ENCODE measurements at regions of chr4 and their contacts with region 1.

Region 1: GRCh38 chr4:162497564-162498167 is 333.9 kb upstream of the FSTL5 start:
- DNase-seq: peak in 1 of 2 experiments; percentile 27
- H3K4me3 ChIP-seq: no peak overlapping the region
- H3K4me3 Mint-ChIP-seq: no peak overlapping the region
- H3K27ac Mint-ChIP-seq: no peak overlapping the region
- H3K4me1 ChIP-seq: no peaks in the 10 kb centered on the region
- H3K4me1 Mint-ChIP-seq: no peaks in the 10 kb centered on the region
- H3K27me3 ChIP-seq: no peaks in the 10 kb centered on the region
- H3K27me3 Mint-ChIP-seq: peaks cover 4% of the 10 kb centered on the region
- CTCF ChIP-seq: peak; percentile 67 to 80

Region 2: DNA sequence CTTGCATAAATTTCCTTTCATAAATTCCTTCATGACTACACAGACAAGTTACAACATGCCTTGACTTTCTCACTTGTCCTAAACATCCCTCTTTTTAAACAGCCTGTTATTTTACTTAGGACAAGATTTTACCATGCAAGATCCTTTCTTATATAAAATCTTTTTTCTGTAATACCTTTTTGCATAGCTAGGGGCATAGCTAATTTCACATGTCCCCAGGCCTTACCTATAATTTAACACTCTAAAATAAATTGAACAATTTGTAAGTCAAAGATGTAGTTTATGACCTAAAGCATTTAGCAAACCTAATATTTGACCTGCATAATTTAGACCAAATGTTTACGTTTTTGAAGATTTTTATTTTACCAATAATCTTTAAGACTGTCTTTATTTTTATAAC is 62.4 kb after region 1 on chr4:
- CTCF ChIA-PET with region 1: no interaction called
- POLR2A ChIA-PET with region 1: no interaction called
- intact Hi-C with region 1: no loop called
- DNase-seq: no peak
- H3K4me3 ChIP-seq: no peak overlapping the region
- H3K4me3 Mint-ChIP-seq: no peak overlapping the region
- H3K27ac Mint-ChIP-seq: no peak overlapping the region
- H3K4me1 ChIP-seq: no peaks in the 10 kb centered on the region
- H3K4me1 Mint-ChIP-seq: no peaks in the 10 kb centered on the region
- H3K27me3 ChIP-seq: no peaks in the 10 kb centered on the region
- H3K27me3 Mint-ChIP-seq: no peaks in the 10 kb centered on the region
- CTCF ChIP-seq: no peak

Region 3: GRCh38 chr4:162865102-162865501 is 367.4 kb after region 1 on chr4:
- CTCF ChIA-PET with region 1: no interaction called
- POLR2A ChIA-PET with region 1: no interaction called
- intact Hi-C with region 1: loop called (anchors 5 kb)
- DNase-seq: peak in 1 of 2 experiments; percentile 21
- H3K4me3 ChIP-seq: no peak overlapping the region
- H3K4me3 Mint-ChIP-seq: no peak overlapping the region
- H3K27ac Mint-ChIP-seq: no peak overlapping the region
- H3K4me1 ChIP-seq: no peaks in the 10 kb centered on the region
- H3K4me1 Mint-ChIP-seq: no peaks in the 10 kb centered on the region
- H3K27me3 ChIP-seq: no peaks in the 10 kb centered on the region
- H3K27me3 Mint-ChIP-seq: no peaks in the 10 kb centered on the region
- CTCF ChIP-seq: peak in 1 of 2 experiments; percentile 4

Region 4: DNA sequence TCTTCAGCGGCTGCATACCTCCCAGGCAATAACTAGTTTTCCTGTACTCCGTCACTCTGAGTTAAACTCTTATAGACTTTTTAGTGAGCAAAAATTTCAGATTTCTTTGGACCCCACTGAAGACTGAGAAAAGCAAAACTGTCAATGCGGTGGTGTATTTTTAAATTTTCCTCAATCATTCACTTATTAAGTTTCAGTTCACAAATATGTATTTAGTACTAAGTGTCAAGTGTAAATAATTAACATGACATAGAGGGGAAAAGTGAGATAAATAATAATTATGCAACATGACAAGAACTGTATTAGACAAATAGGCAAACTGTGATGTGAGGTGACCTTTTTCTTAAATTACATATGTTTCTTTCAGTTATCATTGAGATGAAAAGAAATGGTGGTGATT is 544.6 kb after region 1 on chr4:
- CTCF ChIA-PET with region 1: no interaction called
- POLR2A ChIA-PET with region 1: no interaction called
- intact Hi-C with region 1: loop called (anchors 1 kb)
- DNase-seq: no peak
- H3K4me3 ChIP-seq: no peak overlapping the region
- H3K4me3 Mint-ChIP-seq: no peak overlapping the region
- H3K27ac Mint-ChIP-seq: no peak overlapping the region
- H3K4me1 ChIP-seq: no peaks in the 10 kb centered on the region
- H3K4me1 Mint-ChIP-seq: no peaks in the 10 kb centered on the region
- H3K27me3 ChIP-seq: no peaks in the 10 kb centered on the region
- H3K27me3 Mint-ChIP-seq: no peaks in the 10 kb centered on the region
- CTCF ChIP-seq: no peak

Region 5: GRCh38 chr4:163332500-163333406 is 835.1 kb after region 1 on chr4 and contains the start of gene NPY1R:
- CTCF ChIA-PET with region 1: interaction called, 3 read pairs
- POLR2A ChIA-PET with region 1: no interaction called
- intact Hi-C with region 1: loop called (anchors 1 kb)
- DNase-seq: peak; percentile 70 to 76
- H3K4me3 ChIP-seq: peak within 1 kb of the TSS; percentile 44
- H3K4me3 Mint-ChIP-seq: peak within 1 kb of the TSS; percentile 87
- H3K27ac Mint-ChIP-seq: no peak within 1 kb of the TSS
- H3K4me1 ChIP-seq: no peaks in the 10 kb centered on the region
- H3K4me1 Mint-ChIP-seq: peaks cover 7% of the 10 kb centered on the region
- H3K27me3 ChIP-seq: no peaks in the 10 kb centered on the region
- H3K27me3 Mint-ChIP-seq: peaks cover 21% of the 10 kb centered on the region
- CTCF ChIP-seq: peak; percentile 74 to 85
- total RNA-seq, gene NPY1R: 1.5 and 3.3 TPM in 2 replicates

Region 6: GRCh38 chr4:163544407-163545038 is 1046.9 kb after region 1 on chr4:
- CTCF ChIA-PET with region 1: no interaction called
- POLR2A ChIA-PET with region 1: no interaction called
- intact Hi-C with region 1: loop called (anchors 1 kb)
- DNase-seq: peak; percentile 50 to 55
- H3K4me3 ChIP-seq: no peak overlapping the region
- H3K4me3 Mint-ChIP-seq: no peak overlapping the region
- H3K27ac Mint-ChIP-seq: no peak overlapping the region
- H3K4me1 ChIP-seq: no peaks in the 10 kb centered on the region
- H3K4me1 Mint-ChIP-seq: no peaks in the 10 kb centered on the region
- H3K27me3 ChIP-seq: no peaks in the 10 kb centered on the region
- H3K27me3 Mint-ChIP-seq: no peaks in the 10 kb centered on the region
- CTCF ChIP-seq: peak; percentile 84 to 90

Measured in Caco-2 (cell line).